MCF 10A (cell line): ENCODE measurements at regions of chr12 and their contacts with region 1.

Region 1: GRCh38 chr12:55926738-55927587 is 731 bp downstream of the PYM1 start:
- DNase-seq: peak; percentile 91
- H3K4me3 Mint-ChIP-seq: peak overlapping the region; percentile 95
- H3K27ac Mint-ChIP-seq: peak overlapping the region; percentile 93
- H3K4me1 Mint-ChIP-seq: peaks cover 38% of the 10 kb centered on the region
- H3K27me3 Mint-ChIP-seq: no peaks in the 10 kb centered on the region
- CTCF ChIP-seq: peak; percentile 85

Region 2: GRCh38 chr12:55728939-55729823 is 197.8 kb before region 1 on chr12 and contains the start of gene CD63:
- CTCF ChIA-PET with region 1: interaction called, 3 read pairs
- POLR2A ChIA-PET with region 1: interaction called, 14 read pairs
- intact Hi-C with region 1: no loop called
- DNase-seq: peak; percentile 93
- H3K4me3 Mint-ChIP-seq: peak within 1 kb of the TSS; percentile 76
- H3K27ac Mint-ChIP-seq: peak within 1 kb of the TSS; percentile 82
- H3K4me1 Mint-ChIP-seq: peaks cover 22% of the 10 kb centered on the region
- H3K27me3 Mint-ChIP-seq: no peaks in the 10 kb centered on the region
- CTCF ChIP-seq: no peak
- total RNA-seq, gene CD63: 552 and 724 TPM in 2 replicates

Region 3: GRCh38 chr12:55847603-55848291 is 79.2 kb before region 1 on chr12:
- CTCF ChIA-PET with region 1: interaction called, 10 read pairs
- POLR2A ChIA-PET with region 1: interaction called, 6 read pairs
- intact Hi-C with region 1: loop called (anchors 1 kb)
- DNase-seq: peak; percentile 97
- H3K4me3 Mint-ChIP-seq: peak overlapping the region; percentile 52
- H3K27ac Mint-ChIP-seq: peak overlapping the region; percentile 99
- H3K4me1 Mint-ChIP-seq: peaks cover 20% of the 10 kb centered on the region
- H3K27me3 Mint-ChIP-seq: no peaks in the 10 kb centered on the region
- CTCF ChIP-seq: no peak

Region 4: GRCh38 chr12:55915482-55915859 is 11.5 kb before region 1 on chr12:
- CTCF ChIA-PET with region 1: interaction called, 24 read pairs
- POLR2A ChIA-PET with region 1: interaction called, 35 read pairs
- intact Hi-C with region 1: no loop called
- DNase-seq: no peak
- H3K4me3 Mint-ChIP-seq: no peak overlapping the region
- H3K27ac Mint-ChIP-seq: peak overlapping the region; percentile 72
- H3K4me1 Mint-ChIP-seq: peaks cover 21% of the 10 kb centered on the region
- H3K27me3 Mint-ChIP-seq: no peaks in the 10 kb centered on the region
- CTCF ChIP-seq: no peak

Region 5: DNA sequence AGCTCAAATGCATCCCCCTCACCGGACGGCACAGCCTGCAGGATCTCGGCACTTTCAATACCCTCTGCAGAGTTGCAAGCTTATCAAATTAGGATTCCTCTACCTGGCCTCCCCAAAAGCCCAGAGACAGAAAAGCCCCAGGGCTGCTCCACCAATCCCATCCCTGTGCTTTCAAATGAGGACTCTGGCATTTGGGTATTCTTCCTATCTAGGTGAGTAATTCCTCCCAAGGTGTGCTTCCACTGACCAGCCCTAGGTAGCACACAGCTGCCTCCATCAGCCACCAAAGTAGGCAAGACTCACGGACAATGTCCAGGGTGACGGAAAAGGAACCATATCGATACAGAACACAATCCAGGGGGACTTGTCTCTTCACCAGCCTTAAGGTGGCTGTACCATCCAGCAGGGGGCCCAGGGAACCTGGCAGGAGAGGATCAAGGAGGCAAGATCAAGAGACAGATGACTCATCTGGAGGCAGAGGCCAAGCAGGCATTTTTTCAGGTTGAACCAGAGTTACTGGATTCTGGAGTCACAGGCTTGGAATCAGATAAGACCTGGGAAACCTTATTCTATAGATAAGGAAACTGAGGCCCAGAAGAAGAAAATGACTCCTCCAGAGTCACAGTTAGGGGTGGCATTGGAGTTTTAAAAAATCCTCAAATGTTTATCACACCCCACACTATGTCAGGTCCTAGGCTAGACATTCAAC is 29.0 kb after region 1 on chr12:
- CTCF ChIA-PET with region 1: interaction called, 10 read pairs
- POLR2A ChIA-PET with region 1: interaction called, 3 read pairs
- intact Hi-C with region 1: no loop called
- DNase-seq: peak; percentile 88
- H3K4me3 Mint-ChIP-seq: no peak overlapping the region
- H3K27ac Mint-ChIP-seq: peak overlapping the region; percentile 32
- H3K4me1 Mint-ChIP-seq: peaks cover 28% of the 10 kb centered on the region
- H3K27me3 Mint-ChIP-seq: no peaks in the 10 kb centered on the region
- CTCF ChIP-seq: peak; percentile 43

Region 6: GRCh38 chr12:56041552-56042429 is 114.8 kb after region 1 on chr12 and contains the start of gene RPS26:
- CTCF ChIA-PET with region 1: interaction called, 7 read pairs
- POLR2A ChIA-PET with region 1: interaction called, 4 read pairs
- intact Hi-C with region 1: loop called (anchors 1 kb)
- DNase-seq: peak; percentile 99
- H3K4me3 Mint-ChIP-seq: peak within 1 kb of the TSS; percentile 81
- H3K27ac Mint-ChIP-seq: peak within 1 kb of the TSS; percentile 91
- H3K4me1 Mint-ChIP-seq: peaks cover 7% of the 10 kb centered on the region
- H3K27me3 Mint-ChIP-seq: no peaks in the 10 kb centered on the region
- CTCF ChIP-seq: peak; percentile 33
- total RNA-seq, gene RPS26: 45.1 and 67.3 TPM in 2 replicates